ENCODE measurements at regions of chr4 and their contacts with region 1.

Region 1: DNA sequence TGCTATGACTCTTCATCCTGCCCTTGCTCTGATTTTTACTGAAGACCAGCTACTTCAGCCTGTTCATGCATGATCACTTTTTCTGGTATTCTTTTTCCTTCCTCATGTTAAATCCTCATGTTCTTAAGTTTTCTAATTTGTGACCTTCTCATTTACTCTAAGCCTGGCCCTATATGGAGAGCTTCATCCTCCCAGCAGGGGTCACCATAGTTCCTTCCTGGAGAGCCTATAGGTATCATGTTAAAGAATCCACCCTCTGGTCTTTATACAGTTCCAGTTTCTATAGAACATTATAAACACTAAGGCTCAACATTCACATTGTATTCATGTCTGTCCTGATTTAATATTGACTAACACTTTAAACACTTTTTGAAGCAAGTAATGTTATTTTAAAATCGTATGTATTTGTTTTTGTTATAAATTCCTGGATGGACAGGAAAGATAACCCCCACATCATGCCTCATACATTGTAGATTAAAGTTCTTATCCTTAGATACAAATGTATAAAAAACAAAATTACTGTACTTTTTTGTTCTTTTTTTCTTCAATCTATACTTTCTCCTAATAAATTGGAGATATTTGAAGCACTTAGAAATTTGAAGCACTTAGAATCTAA is 53.8 kb upstream of the OTUD4 start:
- DNase-seq: peak; percentile 30
- ATAC-seq: peak; percentile 98
- H3K4me3 ChIP-seq: no peak overlapping the region
- H3K27ac ChIP-seq: no peak overlapping the region
- H3K4me1 ChIP-seq: no peaks in the 10 kb centered on the region
- H3K27me3 ChIP-seq: no peaks in the 10 kb centered on the region
- CTCF ChIP-seq: peak; percentile 74; the same call in 1 of the 2 replicates

Region 2: DNA sequence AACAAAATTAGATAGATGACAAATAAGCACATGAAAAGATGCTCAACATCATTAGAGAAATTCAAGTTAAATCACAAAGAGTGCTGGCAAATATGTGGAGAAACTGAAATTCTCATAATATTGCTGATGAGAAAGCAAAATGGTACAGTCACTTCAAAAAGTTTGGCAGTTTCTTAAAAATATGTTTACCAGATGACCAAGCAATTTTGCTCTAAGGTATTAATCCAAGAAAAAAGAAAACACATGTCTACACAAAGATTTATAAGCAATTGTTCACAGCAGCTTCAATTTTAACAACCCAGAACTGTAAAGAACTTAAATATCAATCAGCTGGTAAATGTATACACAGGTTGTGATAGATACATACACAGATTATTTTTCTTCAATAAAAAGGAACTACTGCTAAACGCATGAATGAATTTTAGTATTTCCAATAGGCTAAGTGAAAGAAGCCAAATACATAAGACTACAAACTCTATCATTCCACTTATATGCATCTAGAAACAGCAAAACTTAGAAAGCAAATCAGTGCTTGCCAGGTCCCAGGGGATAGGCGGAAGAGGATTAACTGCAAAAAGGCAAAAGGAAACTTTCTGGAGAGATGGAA is 65.5 kb before region 1 on chr4:
- CTCF ChIA-PET with region 1: no interaction called
- POLR2A ChIA-PET with region 1: no interaction called
- in situ Hi-C with region 1: no loop called
- intact Hi-C with region 1: no loop called
- DNase-seq: no peak
- ATAC-seq: no peak
- H3K4me3 ChIP-seq: no peak overlapping the region
- H3K27ac ChIP-seq: no peak overlapping the region
- H3K4me1 ChIP-seq: no peaks in the 10 kb centered on the region
- H3K27me3 ChIP-seq: no peaks in the 10 kb centered on the region
- CTCF ChIP-seq: no peak

Region 3: DNA sequence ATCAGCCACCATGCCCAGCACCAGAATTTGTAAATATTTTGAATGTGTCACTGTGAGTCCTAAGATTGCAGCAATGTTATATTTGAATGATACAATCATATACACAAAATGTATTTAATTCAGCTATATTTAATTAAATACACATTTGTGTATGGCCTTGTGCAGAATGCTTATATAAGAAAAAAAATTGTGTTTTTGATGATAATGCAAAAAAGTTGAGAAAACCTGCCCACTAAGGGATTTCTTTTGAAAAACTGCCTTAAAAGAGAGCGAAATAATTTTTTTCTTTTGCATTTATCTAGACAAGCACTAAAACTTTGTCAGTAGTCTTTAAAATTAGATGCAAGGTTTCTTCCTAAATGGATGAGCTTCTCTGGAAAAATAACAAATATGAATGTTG is 14.3 kb after region 1 on chr4:
- CTCF ChIA-PET with region 1: interaction called, 12 read pairs
- POLR2A ChIA-PET with region 1: no interaction called
- in situ Hi-C with region 1: no loop called
- intact Hi-C with region 1: no loop called
- DNase-seq: no peak
- ATAC-seq: no peak
- H3K4me3 ChIP-seq: no peak overlapping the region
- H3K27ac ChIP-seq: no peak overlapping the region
- H3K4me1 ChIP-seq: no peaks in the 10 kb centered on the region
- H3K27me3 ChIP-seq: no peaks in the 10 kb centered on the region
- CTCF ChIP-seq: no peak

Region 4: DNA sequence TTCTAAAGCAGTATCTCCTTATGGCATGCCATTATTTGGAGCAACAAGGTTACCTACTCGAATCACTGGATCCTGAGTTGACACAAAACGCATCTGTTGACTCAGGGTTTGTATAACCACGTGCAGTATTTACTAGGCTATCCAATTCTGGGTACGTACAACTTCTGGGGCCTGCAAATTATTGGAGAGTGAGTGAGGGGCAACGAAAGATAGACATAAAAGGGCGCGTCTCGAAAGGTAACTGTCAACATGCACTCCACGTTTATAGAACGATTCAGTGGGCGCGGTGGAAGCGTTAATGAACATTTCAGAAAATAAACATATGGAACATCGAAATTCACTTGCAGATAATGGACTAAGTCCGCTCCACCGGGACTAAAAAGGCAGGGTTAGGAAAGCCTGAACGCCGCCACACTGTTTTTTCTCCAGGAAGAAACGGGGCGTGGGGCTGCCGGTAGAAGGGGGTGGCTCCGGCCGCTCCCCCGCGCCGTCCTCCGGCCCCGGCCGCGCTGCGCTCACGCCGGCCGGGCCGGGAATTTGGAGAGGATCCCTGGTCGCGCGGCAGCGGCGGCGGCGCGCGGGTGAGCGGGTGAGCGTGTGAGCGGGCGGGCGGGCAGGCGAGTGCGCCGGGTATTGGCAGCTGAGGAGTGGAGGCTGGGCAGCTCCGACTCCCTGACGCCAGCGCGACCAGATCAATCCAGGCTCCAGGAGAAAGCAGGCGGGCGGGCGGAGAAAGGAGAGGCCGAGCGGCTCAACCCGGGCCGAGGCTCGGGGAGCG is 247.2 kb after region 1 on chr4 and contains the start of gene SMAD1:
- CTCF ChIA-PET with region 1: no interaction called
- POLR2A ChIA-PET with region 1: no interaction called
- in situ Hi-C with region 1: no loop called
- intact Hi-C with region 1: loop called (anchors 10 kb)
- DNase-seq: no peak
- ATAC-seq: peak; percentile 93
- H3K4me3 ChIP-seq: peak within 1 kb of the TSS; percentile 68 to 76
- H3K27ac ChIP-seq: peak within 1 kb of the TSS; percentile 86
- H3K4me1 ChIP-seq: peaks cover 2% of the 10 kb centered on the region; the same call in 1 of the 2 replicates
- H3K27me3 ChIP-seq: no peaks in the 10 kb centered on the region
- CTCF ChIP-seq: no peak
- total RNA-seq, gene SMAD1: 24.1 TPM

Region 5: GRCh38 chr4:145557720-145558119 is 323.5 kb after region 1 on chr4:
- CTCF ChIA-PET with region 1: no interaction called
- POLR2A ChIA-PET with region 1: no interaction called
- in situ Hi-C with region 1: no loop called
- intact Hi-C with region 1: loop called (anchors 1 kb)
- DNase-seq: peak; percentile 39
- ATAC-seq: peak; percentile 70; the same call in 1 of the 2 replicates
- H3K4me3 ChIP-seq: no peak overlapping the region
- H3K27ac ChIP-seq: no peak overlapping the region
- H3K4me1 ChIP-seq: peaks cover 3% of the 10 kb centered on the region; the same call in 1 of the 2 replicates
- H3K27me3 ChIP-seq: no peaks in the 10 kb centered on the region
- CTCF ChIP-seq: peak; percentile 78

Region 6: DNA sequence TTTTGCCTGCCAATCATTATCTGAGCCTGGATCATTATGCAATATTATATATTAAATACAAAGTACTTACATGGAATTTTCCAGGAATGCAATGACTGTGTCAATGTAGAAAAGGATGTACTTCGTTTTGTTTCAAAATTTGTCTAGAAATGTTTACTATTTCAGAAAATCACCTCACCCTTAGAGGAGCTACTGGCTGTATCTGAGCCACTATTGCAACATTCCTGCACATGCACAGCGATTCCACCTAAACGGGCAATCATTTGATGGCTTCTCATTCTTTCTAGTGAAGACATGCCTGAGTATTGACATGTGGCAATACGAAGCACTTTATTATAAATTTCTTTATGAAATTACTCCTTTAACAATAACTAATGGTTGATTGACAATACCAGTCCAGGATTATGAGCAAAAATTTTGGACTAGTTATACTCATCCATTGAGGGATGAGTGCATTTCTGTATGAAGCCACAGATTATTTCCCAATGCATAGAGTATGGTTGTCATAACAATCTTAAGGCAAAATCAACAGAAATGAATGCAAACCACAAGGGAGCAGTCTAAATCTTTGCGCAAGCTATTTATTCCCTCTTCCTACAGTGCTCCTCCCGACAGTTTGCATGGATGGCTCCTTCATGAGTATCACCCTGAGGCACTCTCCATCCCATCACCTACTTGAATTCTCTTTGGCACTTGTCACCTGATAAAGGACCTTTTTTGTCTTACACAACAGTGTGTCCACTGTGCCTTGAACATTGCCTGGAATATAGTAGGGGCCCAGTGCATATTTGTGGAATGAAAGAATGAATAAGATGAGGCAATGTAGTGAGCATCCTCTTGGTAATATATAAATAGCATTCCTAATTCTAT is 349.2 kb after region 1 on chr4:
- CTCF ChIA-PET with region 1: no interaction called
- POLR2A ChIA-PET with region 1: no interaction called
- in situ Hi-C with region 1: no loop called
- intact Hi-C with region 1: no loop called
- DNase-seq: no peak
- ATAC-seq: no peak
- H3K4me3 ChIP-seq: no peak overlapping the region
- H3K27ac ChIP-seq: no peak overlapping the region
- H3K4me1 ChIP-seq: no peaks in the 10 kb centered on the region
- H3K27me3 ChIP-seq: no peaks in the 10 kb centered on the region
- CTCF ChIP-seq: no peak

Region 7: GRCh38 chr4:145609481-145610427 is 375.6 kb after region 1 on chr4:
- CTCF ChIA-PET with region 1: interaction called, 3 read pairs
- POLR2A ChIA-PET with region 1: no interaction called
- in situ Hi-C with region 1: no loop called
- intact Hi-C with region 1: loop called (anchors 1 kb)
- DNase-seq: no peak
- ATAC-seq: peak; percentile 62; the same call in 1 of the 2 replicates
- H3K4me3 ChIP-seq: no peak overlapping the region
- H3K27ac ChIP-seq: no peak overlapping the region
- H3K4me1 ChIP-seq: no peaks in the 10 kb centered on the region
- H3K27me3 ChIP-seq: no peaks in the 10 kb centered on the region
- CTCF ChIP-seq: peak; percentile 65; the same call in 1 of the 2 replicates

Measured in Panc1 (cell line).